ENCODE measurements at regions of chr5 and their contacts with region 1.

Region 1: GRCh38 chr5:41695920-41696582 is 174.2 kb downstream of the OXCT1 start:
- DNase-seq: no peak
- ATAC-seq: no peak

Region 2: DNA sequence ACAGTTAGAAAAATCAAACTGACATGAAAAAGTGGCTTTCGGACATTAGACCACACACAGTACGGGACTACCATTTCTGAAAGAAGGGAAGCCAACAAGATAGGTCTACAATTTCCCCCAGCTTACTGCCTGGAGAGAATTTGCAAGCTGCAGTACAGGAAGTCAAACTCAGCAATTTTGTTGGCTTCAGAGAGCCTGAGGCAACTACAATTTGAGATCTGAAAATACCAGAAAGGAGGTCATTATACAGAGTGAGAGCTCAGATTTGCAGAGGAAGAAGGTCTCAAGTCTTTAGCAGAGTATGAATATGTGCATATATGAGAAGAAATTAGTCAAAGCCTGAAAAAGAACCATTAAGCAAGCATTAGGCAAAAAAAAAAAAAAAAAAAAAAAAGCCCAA is 91.2 kb after region 1 on chr5:
- intact Hi-C with region 1: no loop called
- DNase-seq: no peak
- ATAC-seq: no peak

Region 3: GRCh38 chr5:41843456-41844370 is 147.7 kb after region 1 on chr5:
- intact Hi-C with region 1: loop called in 1 of 2 experiments (anchors 10 kb)
- DNase-seq: no peak
- ATAC-seq: peak; percentile 69 to 70